Activated CD4-positive, alpha-beta T cell treated with anti-CD3 and anti-CD28 coated beads, Interleukin-2, amount 10 ng/mL, durations not matched to agents 24 days and 14 days (primary cell): ENCODE measurements at regions of chr9 and their contacts with region 1.

Region 1: DNA sequence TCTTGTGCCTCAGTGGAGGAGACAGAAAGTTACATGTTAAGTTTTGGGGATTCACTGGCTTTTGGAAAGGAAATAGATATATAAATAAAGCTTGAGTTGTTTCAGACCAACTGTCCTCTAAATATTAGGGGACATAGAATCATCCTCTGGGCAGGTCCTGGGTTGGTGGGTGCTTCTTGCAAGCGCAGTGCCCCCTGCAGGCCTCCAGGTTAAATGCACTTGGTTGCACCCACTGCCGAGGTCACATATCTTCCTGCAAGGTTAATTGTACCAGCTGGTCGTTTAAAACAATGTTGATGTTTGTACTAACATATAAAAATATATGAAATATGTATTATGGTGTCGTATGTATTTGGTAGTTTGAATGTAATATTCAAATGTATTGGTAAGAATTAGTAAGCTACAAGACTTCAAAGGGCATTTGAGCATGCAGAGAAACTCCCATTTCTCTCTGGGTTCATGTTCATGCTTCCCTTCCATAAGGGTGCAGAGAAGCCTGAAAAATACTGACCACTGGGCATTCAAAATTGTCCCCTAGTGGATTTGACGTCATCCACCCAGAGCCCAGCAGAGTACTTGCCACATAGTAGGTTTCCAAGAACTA is 87.0 kb downstream of the ZNF618 start:
- DNase-seq: peak; percentile 79
- H3K4me3 Mint-ChIP-seq: no peak overlapping the region
- H3K27ac Mint-ChIP-seq: no peak overlapping the region
- H3K4me1 Mint-ChIP-seq: no peaks in the 10 kb centered on the region
- H3K27me3 Mint-ChIP-seq: no peaks in the 10 kb centered on the region

Region 2: DNA sequence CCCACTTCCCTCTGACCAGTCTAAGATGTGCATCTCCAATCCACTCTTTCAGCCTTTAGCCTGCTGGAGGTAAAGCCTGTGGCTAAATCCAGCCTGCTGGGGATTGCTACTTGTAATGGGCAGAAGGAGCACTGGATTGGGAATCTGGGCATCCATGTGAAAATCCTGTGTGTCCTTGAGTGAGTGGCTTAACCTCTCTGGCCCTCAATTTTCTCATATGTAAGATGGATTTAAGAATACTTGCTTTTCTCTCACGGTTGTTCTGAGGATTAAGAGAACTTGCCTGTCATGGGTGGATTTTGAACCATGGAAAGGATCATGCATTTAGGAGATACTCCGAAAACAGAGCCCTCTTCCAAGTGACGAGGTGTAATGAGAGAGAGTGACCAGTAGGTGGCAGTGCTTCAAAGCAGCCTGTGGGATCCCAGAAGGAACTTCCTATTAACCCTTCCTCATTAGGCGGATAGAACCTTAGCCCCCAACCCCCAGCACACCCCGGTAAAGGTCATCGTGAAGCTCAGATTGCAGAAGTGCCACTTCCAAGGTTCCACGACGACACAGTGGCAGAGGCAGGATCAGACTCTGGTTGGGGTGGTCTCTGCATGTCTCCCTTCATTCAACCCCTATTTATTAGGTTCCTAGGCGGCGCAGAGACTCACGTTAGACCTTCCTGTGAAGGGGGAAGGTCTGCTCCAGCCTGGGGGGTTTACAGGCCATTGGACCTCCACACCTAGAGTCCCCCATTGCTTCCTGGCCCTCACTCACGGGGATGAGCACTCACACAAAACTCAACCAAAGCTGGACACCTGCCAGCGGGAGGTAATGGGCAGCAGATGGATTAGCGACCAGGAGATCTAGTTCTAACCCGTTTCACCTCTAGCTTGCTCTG is 155.7 kb before region 1 on chr9:
- intact Hi-C with region 1: loop called (anchors 1 kb)
- DNase-seq: peak; percentile 79
- H3K4me3 Mint-ChIP-seq: no peak overlapping the region
- H3K27ac Mint-ChIP-seq: no peak overlapping the region
- H3K4me1 Mint-ChIP-seq: no peaks in the 10 kb centered on the region
- H3K27me3 Mint-ChIP-seq: peaks cover 10% of the 10 kb centered on the region

Region 3: DNA sequence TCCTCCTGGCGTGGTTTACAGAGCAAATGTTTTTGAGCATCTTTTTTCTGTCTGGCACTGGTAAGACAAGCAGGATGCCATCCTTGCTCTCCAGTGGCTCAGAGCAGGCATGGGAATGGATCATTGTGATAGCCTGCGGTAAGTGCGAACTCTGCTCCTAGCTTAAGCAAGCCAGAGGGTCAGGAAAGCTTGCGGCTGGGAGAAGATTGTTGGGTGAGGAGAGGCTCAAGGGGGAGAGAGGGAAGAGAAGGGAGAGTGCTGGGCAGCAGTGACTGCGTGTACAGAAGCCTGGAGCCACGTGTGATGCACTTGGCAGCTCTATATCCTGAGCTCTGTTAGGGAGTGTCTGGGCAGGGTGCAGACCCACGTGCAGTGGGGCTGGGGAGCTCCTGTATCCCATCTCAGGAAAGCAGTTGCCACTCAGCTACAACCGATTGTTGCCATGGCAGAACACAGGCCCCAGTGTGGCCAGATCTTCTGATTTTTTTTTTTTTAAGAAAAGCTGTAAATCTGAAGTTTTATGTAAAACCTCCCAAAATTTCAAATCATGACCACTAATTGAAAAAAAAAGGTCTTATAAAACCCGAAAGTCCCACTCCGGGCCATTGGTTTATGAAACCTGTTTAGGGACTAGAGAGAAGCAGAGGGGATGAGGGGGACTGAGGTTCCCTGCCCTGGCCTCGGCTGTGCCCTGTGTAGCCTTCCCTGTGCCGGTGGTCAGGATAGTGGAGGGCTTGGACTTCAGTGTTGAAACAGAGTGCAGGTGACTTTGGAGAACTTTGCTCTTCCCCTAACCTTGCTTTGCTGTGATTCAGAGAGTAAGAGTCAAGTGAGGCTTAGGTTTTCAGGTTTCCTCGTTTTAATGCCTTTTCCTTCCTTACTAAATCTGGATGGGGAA is 19.8 kb before region 1 on chr9:
- intact Hi-C with region 1: no loop called
- DNase-seq: no peak
- H3K4me3 Mint-ChIP-seq: no peak overlapping the region
- H3K27ac Mint-ChIP-seq: no peak overlapping the region
- H3K4me1 Mint-ChIP-seq: no peaks in the 10 kb centered on the region
- H3K27me3 Mint-ChIP-seq: peaks cover 12% of the 10 kb centered on the region